ENCODE measurements at regions of chr9 and their contacts with region 1.

Region 1: DNA sequence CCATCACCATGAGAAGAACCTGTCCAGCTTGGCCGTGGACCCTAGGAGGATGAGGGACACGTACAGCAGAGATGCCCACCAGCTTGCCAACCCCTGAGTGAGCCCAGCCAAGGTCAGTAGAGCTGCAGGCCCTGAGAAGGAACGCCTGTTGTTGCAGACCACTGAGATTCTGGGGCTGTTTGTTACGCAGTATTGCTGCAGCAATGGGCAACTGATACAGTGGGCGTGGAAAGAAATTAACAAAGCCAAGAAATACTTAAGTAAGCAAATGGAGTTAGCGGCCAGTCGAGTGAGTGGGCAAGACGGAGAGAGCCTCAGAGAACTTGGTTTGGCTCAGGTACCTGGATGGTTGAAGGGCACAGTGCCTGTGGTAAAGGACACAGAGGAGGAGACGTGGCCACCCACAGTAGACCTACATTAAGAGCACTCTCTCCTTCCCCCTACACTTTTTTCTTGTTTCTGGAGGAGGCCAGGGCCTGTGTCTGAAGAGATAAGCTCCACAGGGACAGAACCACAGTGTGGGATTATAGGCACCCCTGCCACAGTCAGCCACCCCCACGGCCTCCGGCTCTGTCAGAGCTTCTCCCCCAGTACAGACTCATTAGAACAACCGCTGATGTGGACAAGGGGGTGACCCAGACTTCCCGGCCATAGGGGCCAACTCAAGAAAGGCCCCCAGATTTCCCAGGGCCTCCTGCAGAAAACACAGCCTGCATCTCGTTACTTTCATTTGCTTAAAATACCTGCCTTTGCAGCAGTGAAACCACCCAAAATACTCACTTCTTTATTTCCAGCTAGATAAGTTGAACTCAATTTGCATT is 40.1 kb upstream of the GRHPR start:
- DNase-seq: no peak
- ATAC-seq: peak; percentile 23
- H3K4me3 Mint-ChIP-seq: peak overlapping the region; percentile 53
- H3K27ac Mint-ChIP-seq: peak overlapping the region; percentile 97
- H3K4me1 Mint-ChIP-seq: peaks cover 94% of the 10 kb centered on the region
- H3K27me3 Mint-ChIP-seq: no peaks in the 10 kb centered on the region
- CTCF ChIP-seq: no peak

Region 2: GRCh38 chr9:37398464-37399025 is 16.2 kb after region 1 on chr9:
- CTCF ChIA-PET with region 1: interaction called, 8 read pairs
- POLR2A ChIA-PET with region 1: interaction called, 975 read pairs
- intact Hi-C with region 1: loop called (anchors 1 kb)
- DNase-seq: no peak
- ATAC-seq: no peak
- H3K4me3 Mint-ChIP-seq: peak overlapping the region; percentile 66
- H3K27ac Mint-ChIP-seq: peak overlapping the region; percentile 92
- H3K4me1 Mint-ChIP-seq: peaks cover 73% of the 10 kb centered on the region
- H3K27me3 Mint-ChIP-seq: no peaks in the 10 kb centered on the region
- CTCF ChIP-seq: no peak